ENCODE measurements at regions of chr10 and their contacts with region 1.

Region 1: GRCh38 chr10:92573798-92574547 is at the start of gene IDE:
- DNase-seq: peak; percentile 83
- H3K4me3 Mint-ChIP-seq: peak within 1 kb of the TSS; percentile 68
- H3K27ac Mint-ChIP-seq: peak within 1 kb of the TSS; percentile 87
- H3K4me1 Mint-ChIP-seq: peaks cover 29% of the 10 kb centered on the region
- H3K27me3 Mint-ChIP-seq: peaks cover 2% of the 10 kb centered on the region
- total RNA-seq, gene IDE: 45.3 and 47.2 TPM in 2 replicates

Region 2: DNA sequence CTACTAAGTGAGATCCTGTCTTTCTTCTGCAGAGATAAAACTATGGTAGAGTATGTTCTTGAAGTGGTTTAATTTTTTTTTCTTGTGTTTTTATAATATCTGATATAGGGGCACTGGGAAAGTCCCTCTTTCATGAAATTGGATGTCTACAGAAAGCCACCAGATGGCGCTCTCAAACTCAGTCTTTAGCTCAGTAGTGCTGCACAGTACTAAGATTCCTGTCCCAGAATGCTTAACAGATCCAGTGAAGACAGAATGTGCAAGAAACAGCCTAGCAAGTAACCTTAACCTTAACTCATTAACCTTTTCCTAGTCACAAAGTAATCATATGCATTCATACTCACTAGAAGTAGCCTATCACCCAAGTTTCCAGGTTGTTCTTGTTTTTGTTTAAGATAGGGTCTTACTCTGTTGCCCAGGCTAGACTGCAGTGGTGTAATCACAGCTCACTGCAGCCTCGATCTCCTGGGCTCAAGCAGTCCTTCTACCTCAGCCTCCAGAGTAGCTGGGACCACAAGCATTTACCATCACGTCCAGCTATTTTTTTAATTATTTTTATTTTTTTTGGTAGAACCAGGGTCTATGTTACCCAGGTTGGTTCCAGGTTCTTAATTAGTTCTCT is 56.8 kb before region 1 on chr10:
- intact Hi-C with region 1: loop called (anchors 1 kb)
- DNase-seq: peak; percentile 34
- H3K4me3 Mint-ChIP-seq: no peak overlapping the region
- H3K27ac Mint-ChIP-seq: no peak overlapping the region
- H3K4me1 Mint-ChIP-seq: peaks cover 6% of the 10 kb centered on the region
- H3K27me3 Mint-ChIP-seq: no peaks in the 10 kb centered on the region

Region 3: DNA sequence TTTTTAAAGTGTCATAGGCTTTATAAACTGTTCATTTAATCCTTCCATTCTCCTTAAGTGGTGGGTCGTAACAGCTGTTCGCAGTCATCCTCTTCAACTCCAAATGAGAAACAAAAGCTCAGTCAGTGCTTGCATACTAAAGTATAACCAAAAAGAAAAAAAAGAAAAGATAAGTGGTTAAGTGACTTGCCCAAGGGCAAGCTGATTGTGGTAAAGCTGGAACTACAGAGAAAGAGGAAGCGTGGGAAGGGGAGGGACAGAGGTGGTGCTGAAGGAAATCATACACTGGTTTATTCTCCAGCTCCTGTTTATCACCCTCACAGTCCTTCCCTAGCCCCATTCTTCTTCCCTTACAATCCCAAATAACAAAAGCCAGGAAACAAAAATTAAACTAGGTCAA is 29.7 kb before region 1 on chr10:
- intact Hi-C with region 1: loop called (anchors 2 kb)
- DNase-seq: no peak
- H3K4me3 Mint-ChIP-seq: no peak overlapping the region
- H3K27ac Mint-ChIP-seq: no peak overlapping the region
- H3K4me1 Mint-ChIP-seq: peaks cover 24% of the 10 kb centered on the region
- H3K27me3 Mint-ChIP-seq: no peaks in the 10 kb centered on the region

Region 4: GRCh38 chr10:92667078-92667477 is 93.1 kb after region 1 on chr10:
- intact Hi-C with region 1: no loop called
- DNase-seq: no peak
- H3K4me3 Mint-ChIP-seq: no peak overlapping the region
- H3K27ac Mint-ChIP-seq: no peak overlapping the region
- H3K4me1 Mint-ChIP-seq: no peaks in the 10 kb centered on the region
- H3K27me3 Mint-ChIP-seq: peaks cover 3% of the 10 kb centered on the region